ENCODE measurements at regions of chr1 and their contacts with region 1.

Region 1: DNA sequence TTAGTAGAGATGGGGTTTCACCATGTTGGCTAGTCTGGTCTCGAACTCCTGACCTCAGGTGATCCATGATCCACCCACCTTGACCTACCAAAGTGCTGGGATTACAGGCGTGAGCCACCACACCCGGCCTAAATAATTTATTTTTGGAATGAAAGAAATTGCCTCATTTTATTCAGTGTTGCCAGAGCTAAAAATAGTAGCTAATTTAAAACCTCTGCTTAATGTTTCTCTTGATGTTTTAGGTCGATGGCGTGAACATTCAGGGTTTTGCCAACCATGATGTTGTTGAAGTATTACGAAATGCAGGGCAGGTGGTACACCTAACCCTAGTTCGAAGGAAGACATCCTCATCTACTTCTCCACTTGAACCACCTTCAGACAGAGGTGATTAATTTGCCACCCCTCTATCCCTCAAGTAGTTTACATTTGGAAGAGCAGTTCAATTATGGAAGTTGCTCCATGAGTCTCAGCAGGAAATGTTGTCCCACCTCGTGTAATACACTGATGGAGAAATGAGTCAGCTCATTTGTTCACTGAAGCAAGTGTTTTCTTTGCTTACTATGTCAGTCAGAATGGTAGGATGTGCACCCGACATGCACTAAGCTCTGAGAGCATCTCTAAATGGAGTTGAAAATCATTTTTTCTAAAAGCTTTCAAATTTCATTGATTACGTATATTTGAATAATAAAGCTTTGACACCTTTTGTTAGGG is 54.9 kb downstream of the PATJ start:
- DNase-seq: peak; percentile 5
- ATAC-seq: no peak
- H3K4me3 ChIP-seq: no peak overlapping the region
- H3K27ac ChIP-seq: no peak overlapping the region
- H3K4me1 ChIP-seq: no peaks in the 10 kb centered on the region
- H3K27me3 ChIP-seq: no peaks in the 10 kb centered on the region
- CTCF ChIP-seq: no peak
- POLR2A ChIP-seq: no peak
- RAD21 ChIP-seq: no peak

Region 2: GRCh38 chr1:61807606-61808140 is 10.5 kb after region 1 on chr1:
- CTCF ChIA-PET with region 1: interaction called, 10 read pairs
- POLR2A ChIA-PET with region 1: no interaction called
- dilution Hi-C with region 1: no loop called
- in situ Hi-C with region 1: no loop called
- intact Hi-C with region 1: no loop called
- DNase-seq: peak; percentile 24
- ATAC-seq: no peak
- H3K4me3 ChIP-seq: no peak overlapping the region
- H3K27ac ChIP-seq: no peak overlapping the region
- H3K4me1 ChIP-seq: no peaks in the 10 kb centered on the region
- H3K27me3 ChIP-seq: no peaks in the 10 kb centered on the region
- CTCF ChIP-seq: no peak
- POLR2A ChIP-seq: no peak
- RAD21 ChIP-seq: no peak